Naive thymus-derived CD8-positive, alpha-beta T cell (primary cell): ENCODE measurements at regions of chr20 and their contacts with region 1.

Region 1: DNA sequence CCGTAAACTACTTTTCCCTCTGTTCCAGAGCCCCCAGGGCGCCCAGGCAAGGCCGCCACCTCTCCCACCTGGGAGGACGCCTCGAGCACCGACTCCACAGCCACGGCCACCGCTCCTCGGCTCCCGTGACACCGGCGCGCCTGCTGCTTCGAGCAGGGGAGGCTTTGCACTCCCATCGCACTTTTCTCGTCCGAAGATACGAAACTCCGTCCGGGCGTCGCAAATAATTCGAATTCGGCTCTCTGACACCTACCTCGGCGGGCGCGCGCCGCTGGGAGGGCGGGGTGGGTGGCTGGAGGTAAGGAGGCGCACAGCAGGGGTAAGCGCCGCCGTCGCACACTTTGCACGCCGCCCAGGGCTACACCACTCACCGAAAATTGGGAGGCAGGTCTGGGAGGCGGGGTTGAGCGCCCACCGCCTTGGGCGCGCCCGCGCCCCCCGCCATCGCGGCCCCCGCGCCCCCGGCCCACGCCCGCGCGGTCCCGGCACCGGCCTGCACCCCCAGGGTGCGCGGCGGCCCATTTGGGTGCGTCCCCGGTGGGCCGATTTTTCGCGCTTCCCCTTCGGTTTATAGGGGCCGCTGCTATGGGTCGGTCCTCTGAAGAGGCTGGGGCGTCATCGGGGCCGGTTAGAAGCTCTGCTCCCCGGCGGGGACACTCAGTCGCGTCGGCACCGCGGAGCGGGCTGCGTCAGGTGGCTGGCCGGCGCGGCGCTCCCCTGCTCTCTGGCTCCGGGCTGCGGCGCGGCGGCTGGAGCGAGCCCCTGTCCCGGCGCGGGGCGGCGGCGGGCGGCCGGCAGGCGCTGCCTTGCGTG is 36.2 kb downstream of the GNAS start:
- DNase-seq: peak; percentile 75 to 93 (median 84)
- ATAC-seq: peak; percentile 47 to 56
- H3K4me3 Mint-ChIP-seq: peak overlapping the region; percentile 78 to 90 (median 84)
- H3K27ac Mint-ChIP-seq: peak overlapping the region in 9 of 10 donors; percentile 83 to 93 (median 90)
- H3K4me1 Mint-ChIP-seq: peaks cover 7 to 38% (median 19%) of the 10 kb centered on the region in 4 donors
- H3K27me3 Mint-ChIP-seq: no peaks in the 10 kb centered on the region

Region 2: DNA sequence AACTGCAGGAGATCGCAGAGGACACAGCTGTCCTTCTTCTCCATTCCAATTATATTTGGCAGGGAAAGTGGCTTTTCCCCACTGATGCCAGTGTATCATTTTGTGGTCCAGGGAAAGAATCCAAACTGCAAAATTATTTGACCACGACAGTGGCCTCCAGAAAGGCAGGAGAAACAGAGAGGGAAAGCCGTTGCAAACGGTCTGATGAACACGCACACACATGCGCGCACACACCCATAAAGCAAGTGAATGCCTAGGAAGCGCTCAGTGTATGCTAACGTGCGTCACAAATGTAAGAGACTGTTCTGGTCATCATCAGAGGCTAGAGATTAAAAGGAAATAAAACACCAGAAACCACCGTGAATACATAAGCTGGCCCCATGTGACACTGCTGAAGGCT is 142.1 kb before region 1 on chr20:
- POLR2A ChIA-PET with region 1: no interaction called
- DNase-seq: no peak
- ATAC-seq: no peak
- H3K4me3 Mint-ChIP-seq: no peak overlapping the region
- H3K27ac Mint-ChIP-seq: peak overlapping the region in 1 of 10 donors; percentile 55
- H3K4me1 Mint-ChIP-seq: no peaks in the 10 kb centered on the region
- H3K27me3 Mint-ChIP-seq: peaks cover 5 to 68% (median 33%) of the 10 kb centered on the region in 5 donors

Region 3: GRCh38 chr20:58877976-58878360 is 10.8 kb before region 1 on chr20:
- POLR2A ChIA-PET with region 1: interaction called, 11 read pairs
- DNase-seq: peak in 5 of 10 donors; percentile 33 to 67 (median 46)
- ATAC-seq: peak; percentile 95 to 97
- H3K4me3 Mint-ChIP-seq: peak overlapping the region in 8 of 10 donors; percentile 28 to 68 (median 50)
- H3K27ac Mint-ChIP-seq: peak overlapping the region; percentile 71 to 93 (median 86)
- H3K4me1 Mint-ChIP-seq: peaks cover 8 to 22% (median 18%) of the 10 kb centered on the region in 4 donors
- H3K27me3 Mint-ChIP-seq: no peaks in the 10 kb centered on the region

Region 4: DNA sequence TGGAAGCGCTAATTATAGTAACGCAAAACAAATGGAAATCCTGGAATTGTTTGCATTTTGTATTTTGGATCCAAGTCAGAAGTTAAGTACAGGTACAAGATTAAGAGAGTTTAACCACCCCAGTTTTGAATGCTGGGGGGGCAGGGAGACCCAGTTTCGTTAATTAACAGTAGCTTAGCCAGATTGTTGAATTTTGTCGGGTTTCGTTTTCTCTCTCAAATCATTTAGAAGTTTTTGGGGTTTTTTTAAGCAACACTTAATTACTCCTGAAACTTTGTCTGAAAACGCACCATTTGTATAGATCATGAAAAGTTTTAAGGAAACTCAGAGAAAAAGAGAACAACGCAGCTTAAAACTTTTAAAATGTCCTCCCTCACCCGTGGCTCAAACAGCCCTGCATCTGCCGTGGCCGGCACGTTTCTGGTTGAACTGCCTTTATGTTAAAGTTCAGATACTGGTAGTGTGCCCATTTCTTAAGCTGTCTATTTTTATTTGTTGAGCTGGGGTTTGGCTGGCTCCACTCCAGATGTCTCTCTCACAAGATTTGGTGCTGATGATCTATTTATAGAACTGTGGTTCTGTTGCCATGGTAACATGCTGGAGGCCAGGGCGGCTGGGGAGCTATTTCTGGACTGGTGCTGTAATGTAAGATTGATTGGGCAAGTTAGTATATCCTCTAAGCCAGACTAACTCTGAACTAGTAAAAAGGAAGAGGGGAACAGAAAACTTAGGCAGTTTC is 18.8 kb after region 1 on chr20:
- POLR2A ChIA-PET with region 1: interaction called, 11 read pairs
- DNase-seq: peak; percentile 25 to 83 (median 61)
- ATAC-seq: peak; percentile 54 to 78
- H3K4me3 Mint-ChIP-seq: peak overlapping the region; percentile 54 to 87 (median 80)
- H3K27ac Mint-ChIP-seq: peak overlapping the region; percentile 76 to 95 (median 90)
- H3K4me1 Mint-ChIP-seq: peaks cover 43 to 80% (median 73%) of the 10 kb centered on the region in 4 donors
- H3K27me3 Mint-ChIP-seq: no peaks in the 10 kb centered on the region

Region 5: GRCh38 chr20:58980700-58981627 is 92.2 kb after region 1 on chr20 and contains the start of gene NELFCD:
- POLR2A ChIA-PET with region 1: interaction called, 12 read pairs
- DNase-seq: peak; percentile 76 to 97 (median 88)
- ATAC-seq: peak; percentile 94
- H3K4me3 Mint-ChIP-seq: peak within 1 kb of the TSS; percentile 54 to 95 (median 92)
- H3K27ac Mint-ChIP-seq: peak within 1 kb of the TSS; percentile 53 to 95 (median 91)
- H3K4me1 Mint-ChIP-seq: peaks cover 22 to 46% (median 34%) of the 10 kb centered on the region in 4 donors
- H3K27me3 Mint-ChIP-seq: peaks cover 0 to 1% (median 0%) of the 10 kb centered on the region in 5 donors
- polyA plus RNA-seq, gene NELFCD: 63.6 to 76.5 (median 74.0) TPM

Region 6: GRCh38 chr20:59042796-59043660 is 154.3 kb after region 1 on chr20:
- POLR2A ChIA-PET with region 1: interaction called, 13 read pairs
- DNase-seq: peak; percentile 88 to 96 (median 94)
- ATAC-seq: peak; percentile 96
- H3K4me3 Mint-ChIP-seq: peak overlapping the region; percentile 63 to 94 (median 90)
- H3K27ac Mint-ChIP-seq: peak overlapping the region; percentile 81 to 98 (median 94)
- H3K4me1 Mint-ChIP-seq: peaks cover 22 to 55% (median 49%) of the 10 kb centered on the region in 4 donors
- H3K27me3 Mint-ChIP-seq: peaks cover 0 to 3% (median 0%) of the 10 kb centered on the region in 5 donors